Adrenal gland (tissue), 19 donors: ENCODE measurements at regions of chr13 and their contacts with region 1.

Region 1: DNA sequence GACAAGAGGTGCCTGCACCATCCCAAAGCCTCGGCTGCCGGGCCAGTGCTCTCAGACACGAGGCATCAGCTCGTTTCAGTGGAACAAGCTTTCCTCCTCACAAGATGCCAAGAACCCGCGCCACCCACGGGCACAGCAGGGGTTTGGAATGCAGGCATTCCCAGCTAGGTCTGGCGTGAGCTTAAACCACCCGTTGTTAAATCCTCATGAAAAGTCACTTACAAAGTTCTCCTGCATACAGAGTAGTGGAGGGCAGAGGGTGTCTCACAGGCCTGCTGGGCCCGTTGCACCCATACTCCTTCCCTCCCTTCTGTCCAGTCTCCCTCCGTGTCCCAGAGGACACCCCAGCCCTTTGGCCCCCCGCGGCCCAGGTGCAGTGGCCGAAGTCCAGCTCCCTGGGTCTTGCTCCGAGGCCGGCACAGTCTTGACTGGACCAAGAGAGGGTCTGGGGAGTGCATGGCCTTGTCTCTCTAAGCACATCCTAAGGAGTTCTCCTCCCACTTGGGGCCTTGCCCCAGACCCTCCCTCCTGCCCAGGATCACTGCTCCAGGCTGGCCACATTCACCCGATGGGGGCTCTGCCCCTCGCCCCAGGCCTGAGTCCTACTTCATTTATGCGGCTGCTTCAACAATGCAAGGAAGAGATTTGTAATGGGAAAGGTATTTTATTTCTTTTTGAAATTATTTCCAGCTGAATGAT is 35.2 kb upstream of the GRTP1 start:
- DNase-seq: no peak
- H3K4me3 ChIP-seq: no peak overlapping the region
- H3K27ac ChIP-seq: no peak overlapping the region
- H3K4me1 ChIP-seq: peaks cover 0 to 4% of the 10 kb centered on the region in 2 donors
- H3K27me3 ChIP-seq: peaks cover 4% of the 10 kb centered on the region
- CTCF ChIP-seq: no peak
- POLR2A ChIP-seq: no peak

Region 2: DNA sequence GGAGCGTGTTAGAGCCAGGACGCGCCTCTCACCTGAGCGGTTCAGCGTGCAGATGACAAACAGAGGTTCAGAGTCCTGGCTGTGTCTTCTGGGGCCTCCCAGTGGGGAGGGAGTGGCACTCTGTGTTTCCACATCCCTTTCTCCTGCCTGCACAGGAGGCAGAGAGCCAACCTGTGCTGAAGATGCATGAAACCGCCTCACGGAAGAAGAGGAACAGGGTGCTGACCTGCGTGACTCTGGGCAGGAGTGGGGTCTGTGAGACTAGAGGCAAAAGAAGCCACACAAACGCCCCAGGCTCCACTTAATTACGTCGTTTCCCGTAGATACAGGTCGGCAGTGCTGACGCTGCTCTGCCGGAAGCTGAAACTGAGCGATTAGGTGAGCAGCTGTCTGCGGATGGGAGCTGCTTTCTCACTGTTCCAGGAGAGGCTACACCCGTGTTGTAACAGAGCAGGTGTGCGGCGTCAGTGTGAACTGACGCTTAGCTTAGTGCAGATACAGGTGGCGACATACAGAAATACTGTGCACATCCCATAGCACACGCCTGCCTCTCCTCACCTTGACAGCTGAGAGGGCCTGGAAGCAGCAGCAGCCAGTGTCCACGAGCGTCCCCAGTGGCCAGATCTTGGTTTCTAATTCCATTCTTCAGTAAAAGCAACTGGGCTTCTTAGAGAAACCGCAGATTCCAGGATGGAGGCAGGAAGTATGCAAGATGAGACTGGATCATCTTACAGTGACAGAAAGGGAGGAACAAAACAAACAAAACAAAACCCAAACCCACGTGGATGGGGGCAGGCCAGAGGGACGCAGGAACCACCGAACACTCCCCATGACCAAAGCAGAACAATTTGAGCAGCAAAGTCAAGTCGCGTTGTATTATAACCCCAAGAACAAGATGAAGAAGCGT is 467.8 kb before region 1 on chr13:
- intact Hi-C with region 1: loop called in 1 of 2 experiments (anchors 10 kb)
- DNase-seq: peak in 4 of 7 donors; percentile 23 to 80 (median 34)
- H3K4me3 ChIP-seq: no peak overlapping the region
- H3K27ac ChIP-seq: peak overlapping the region in 1 of 5 donors; percentile 34
- H3K4me1 ChIP-seq: peaks cover 0 to 9% of the 10 kb centered on the region in 2 donors
- H3K27me3 ChIP-seq: no peaks in the 10 kb centered on the region
- CTCF ChIP-seq: peak; percentile 22 to 52 (median 42)
- POLR2A ChIP-seq: no peak

Region 3: GRCh38 chr13:113437408-113438010 is 38.4 kb after region 1 on chr13:
- intact Hi-C with region 1: no loop called
- DNase-seq: no peak
- H3K4me3 ChIP-seq: no peak overlapping the region
- H3K27ac ChIP-seq: no peak overlapping the region
- H3K4me1 ChIP-seq: no peaks in the 10 kb centered on the region
- H3K27me3 ChIP-seq: no peaks in the 10 kb centered on the region
- CTCF ChIP-seq: no peak
- POLR2A ChIP-seq: no peak